ENCODE measurements at regions of chr2 and their contacts with region 1.

Region 1: DNA sequence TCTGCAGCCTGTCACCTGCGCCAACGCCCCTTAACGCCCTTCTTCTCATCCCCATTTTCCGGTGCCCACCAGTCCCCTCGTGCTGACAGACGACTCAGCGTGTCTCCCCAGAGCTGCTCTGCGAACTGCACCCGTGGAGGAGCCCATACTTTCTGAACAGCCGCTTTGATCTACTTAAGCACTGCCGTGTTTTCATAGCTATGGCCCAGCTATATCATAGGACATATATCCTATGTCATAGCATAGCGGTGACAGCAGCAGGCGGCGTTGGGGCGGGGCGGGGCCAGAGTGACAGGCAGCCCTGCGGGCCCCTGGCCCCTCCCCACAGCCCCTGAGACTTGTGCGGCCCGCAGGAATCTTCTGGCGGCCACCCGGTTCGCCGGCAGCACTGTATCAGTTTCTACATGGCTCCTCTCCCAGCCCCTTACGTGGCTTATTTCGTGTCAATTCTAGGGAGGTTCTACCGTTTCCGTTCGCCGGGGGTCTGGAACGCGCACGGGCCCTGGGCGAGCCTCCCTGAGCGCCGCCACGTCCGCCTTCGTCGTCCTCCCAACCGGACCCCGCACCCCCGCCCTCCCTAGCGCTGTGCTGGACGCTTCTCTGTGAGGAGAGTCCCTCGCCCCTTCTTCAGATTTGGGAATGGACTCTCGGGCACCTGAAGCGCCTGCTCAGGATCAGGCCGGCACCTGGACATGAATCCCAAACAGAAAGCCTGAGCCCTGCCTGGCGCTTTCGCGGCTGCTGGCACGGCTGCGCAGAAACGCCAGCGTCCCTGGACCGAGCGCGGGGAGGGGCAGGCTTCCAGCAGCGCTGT is 35.4 kb downstream of the PTPN18 start:
- DNase-seq: peak; percentile 68
- ATAC-seq: peak; percentile 95
- H3K4me3 ChIP-seq: peak overlapping the region; percentile 61
- H3K27ac ChIP-seq: peak overlapping the region; percentile 80
- H3K4me1 ChIP-seq: peaks cover 11% of the 10 kb centered on the region
- H3K27me3 ChIP-seq: no peaks in the 10 kb centered on the region
- CTCF ChIP-seq: no peak
- POLR2A ChIP-seq: peak; percentile 82
- RAD21 ChIP-seq: no peak

Region 2: DNA sequence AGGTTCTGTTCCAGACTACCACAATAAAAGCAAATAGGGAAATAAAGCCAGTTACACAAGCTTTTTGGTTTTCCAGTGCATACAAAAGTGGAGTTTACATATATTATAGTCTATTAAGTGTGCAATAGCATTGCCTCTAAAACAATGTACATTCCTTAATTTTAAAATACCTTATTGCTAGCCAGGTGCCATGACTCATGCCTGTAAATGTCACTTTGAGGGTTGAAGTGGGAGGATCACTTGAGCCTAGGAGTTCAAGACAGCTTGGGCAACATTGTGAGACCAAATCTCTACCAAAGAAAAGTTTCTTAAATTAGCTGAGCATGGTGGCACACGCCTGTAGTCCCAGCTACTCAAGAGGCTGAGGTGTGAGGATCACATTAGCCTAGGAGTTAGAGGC is 101.5 kb before region 1 on chr2:
- CTCF ChIA-PET with region 1: no interaction called
- POLR2A ChIA-PET with region 1: no interaction called
- dilution Hi-C with region 1: no loop called
- in situ Hi-C with region 1: no loop called
- intact Hi-C with region 1: no loop called
- DNase-seq: no peak
- ATAC-seq: no peak
- H3K4me3 ChIP-seq: no peak overlapping the region
- H3K27ac ChIP-seq: no peak overlapping the region
- H3K4me1 ChIP-seq: no peaks in the 10 kb centered on the region
- H3K27me3 ChIP-seq: no peaks in the 10 kb centered on the region
- CTCF ChIP-seq: no peak
- POLR2A ChIP-seq: no peak
- RAD21 ChIP-seq: no peak

Region 3: GRCh38 chr2:130342533-130343275 is 48.6 kb before region 1 on chr2 and contains the start of gene IMP4:
- CTCF ChIA-PET with region 1: no interaction called
- POLR2A ChIA-PET with region 1: no interaction called
- dilution Hi-C with region 1: no loop called
- in situ Hi-C with region 1: no loop called
- intact Hi-C with region 1: loop called (anchors 1 kb)
- DNase-seq: peak; percentile 100
- ATAC-seq: peak; percentile 92
- H3K4me3 ChIP-seq: peak within 1 kb of the TSS; percentile 96
- H3K27ac ChIP-seq: peak within 1 kb of the TSS; percentile 79
- H3K4me1 ChIP-seq: peaks cover 6% of the 10 kb centered on the region
- H3K27me3 ChIP-seq: no peaks in the 10 kb centered on the region
- CTCF ChIP-seq: peak; percentile 25
- POLR2A ChIP-seq: peak; percentile 55; the same call in 1 of the 2 replicates
- RAD21 ChIP-seq: 0 out of 2 replicates have a peak, but pooled peaks have one; percentile 27
- total RNA-seq, gene IMP4: 127 and 154 TPM in 2 replicates